ENCODE measurements at regions of chr2 and their contacts with region 1.

Region 1: GRCh38 chr2:225660262-225661131 is 261.0 kb downstream of the NYAP2 start:
- DNase-seq: peak; percentile 61
- CTCF ChIP-seq: peak; percentile 87

Region 2: DNA sequence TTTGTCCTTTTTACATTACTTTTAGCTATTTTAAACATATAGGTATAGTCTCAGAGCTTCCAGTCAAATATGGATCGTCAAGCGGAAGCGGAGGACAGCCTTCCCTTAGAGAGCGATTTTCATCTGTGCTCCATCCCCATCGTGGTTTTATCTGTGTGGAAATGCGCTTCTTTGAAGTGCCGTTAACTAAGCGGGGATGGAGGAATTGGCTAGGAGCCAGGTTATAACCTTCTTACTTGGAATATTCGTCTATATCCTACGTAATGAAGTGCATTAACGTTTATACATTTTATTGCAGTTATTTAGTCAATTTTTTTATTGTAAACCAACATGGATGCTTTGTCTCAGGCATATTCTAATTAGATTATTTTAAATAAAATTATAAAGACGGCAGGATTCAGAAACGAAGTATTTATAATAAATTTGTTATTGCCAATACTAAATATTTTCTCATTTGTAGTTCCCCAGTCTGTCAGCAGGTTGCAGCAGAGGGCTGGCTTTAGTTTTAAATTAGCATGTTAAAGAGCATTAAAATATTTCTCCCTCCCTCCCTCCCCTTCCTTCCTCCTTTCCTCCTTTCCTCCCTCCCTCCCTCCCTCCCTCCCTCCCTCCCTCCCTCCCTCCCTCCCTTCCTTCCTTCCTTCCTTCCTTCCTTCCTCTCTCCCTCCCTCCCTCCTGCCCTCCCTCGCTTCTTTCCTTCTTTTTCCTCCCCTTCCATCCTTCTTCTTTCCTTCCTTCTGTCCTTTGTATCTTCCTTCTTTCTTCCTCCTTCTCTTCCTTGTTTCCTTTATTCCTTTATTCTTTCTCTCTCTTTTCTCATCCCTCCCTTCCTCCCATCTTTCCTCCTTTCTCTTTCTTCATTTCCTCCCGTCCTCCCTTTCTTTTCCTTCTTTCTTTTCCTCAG is 537.7 kb before region 1 on chr2:
- CTCF ChIA-PET with region 1: interaction called, 16 read pairs
- POLR2A ChIA-PET with region 1: no interaction called
- DNase-seq: peak; percentile 15
- CTCF ChIP-seq: peak; percentile 66

Region 3: GRCh38 chr2:225282858-225283710 is 377.4 kb before region 1 on chr2:
- CTCF ChIA-PET with region 1: interaction called, 26 read pairs
- POLR2A ChIA-PET with region 1: no interaction called
- DNase-seq: peak; percentile 37
- CTCF ChIP-seq: peak; percentile 65

Region 4: DNA sequence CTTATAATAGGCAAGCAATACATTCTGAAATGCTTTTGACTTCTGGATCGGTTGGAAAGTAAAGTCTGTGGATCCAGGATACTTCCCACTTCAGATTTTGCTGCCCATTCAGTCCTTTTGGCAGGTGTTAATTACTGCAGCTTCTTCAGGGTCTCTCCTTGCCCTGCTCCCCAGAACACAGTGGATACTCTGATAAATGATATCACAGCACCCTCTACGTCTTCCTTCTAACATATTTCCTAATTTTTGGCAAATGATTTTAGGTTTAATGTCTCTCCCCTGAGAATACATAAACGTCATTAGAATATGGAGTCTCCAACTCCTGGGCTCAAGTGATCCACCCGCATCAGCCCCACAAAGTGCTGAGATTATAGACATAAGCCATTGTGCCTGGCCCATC is 11.2 kb before region 1 on chr2:
- CTCF ChIA-PET with region 1: interaction called, 34 read pairs
- POLR2A ChIA-PET with region 1: no interaction called
- DNase-seq: no peak
- CTCF ChIP-seq: no peak